AG04449 (cell line): ENCODE measurements at regions of chr1 and their contacts with region 1.

Region 1: GRCh38 chr1:98468111-98468717 is 193.3 kb upstream of the SNX7 start:
- DNase-seq: peak; percentile 21
- H3K4me3 ChIP-seq: no peak overlapping the region
- CTCF ChIP-seq: peak; percentile 56

Region 2: DNA sequence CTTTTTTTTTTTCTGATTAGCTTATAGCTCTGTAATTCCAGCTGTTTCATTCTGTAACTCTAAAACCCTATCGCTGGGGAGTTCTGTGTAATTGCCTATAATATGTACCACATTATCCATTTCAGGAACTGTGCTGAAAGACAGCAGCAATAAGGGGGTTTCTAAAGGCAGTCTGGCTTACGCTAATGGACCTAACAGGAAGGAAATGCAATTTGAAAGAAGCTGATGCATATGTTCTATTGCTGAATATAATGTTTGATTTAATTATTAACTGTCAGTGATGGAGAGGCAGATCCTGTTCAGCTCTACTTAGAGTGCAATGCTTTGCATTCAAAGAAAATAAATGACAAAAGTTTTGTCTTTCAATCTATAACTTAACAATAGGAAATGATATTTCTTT is 16.1 kb before region 1 on chr1:
- CTCF ChIA-PET with region 1: interaction called, 23 read pairs
- POLR2A ChIA-PET with region 1: no interaction called
- DNase-seq: no peak
- H3K4me3 ChIP-seq: no peak overlapping the region
- CTCF ChIP-seq: no peak